HCT116 (cell line): ENCODE measurements at regions of chr4 and their contacts with region 1.

Region 1: GRCh38 chr4:74133786-74134499 is 24.0 kb upstream of the MTHFD2L start:
- DNase-seq: peak; percentile 86
- ATAC-seq: peak; percentile 99
- H3K4me3 ChIP-seq: no peak overlapping the region
- H3K27ac ChIP-seq: no peak overlapping the region
- H3K4me1 ChIP-seq: peaks cover 0 to 6% of the 10 kb centered on the region in 2 experiments; a peak in 2 of 4 replicates
- H3K27me3 ChIP-seq: no peaks in the 10 kb centered on the region
- CTCF ChIP-seq: peak; percentile 84 to 89 (median 85)
- POLR2A ChIP-seq: no peak
- RAD21 ChIP-seq: peak; percentile 97

Region 2: GRCh38 chr4:73311428-73311827 is 822.5 kb before region 1 on chr4:
- CTCF ChIA-PET with region 1: no interaction called
- POLR2A ChIA-PET with region 1: no interaction called
- RAD21 ChIA-PET with region 1: no interaction called
- intact Hi-C with region 1: loop called (anchors 10 kb)
- DNase-seq: peak; percentile 8
- ATAC-seq: no peak
- H3K4me3 ChIP-seq: no peak overlapping the region
- H3K27ac ChIP-seq: no peak overlapping the region
- H3K4me1 ChIP-seq: no peaks in the 10 kb centered on the region
- H3K27me3 ChIP-seq: no peaks in the 10 kb centered on the region
- CTCF ChIP-seq: peak; percentile 12 to 60 (median 42); a peak in 3 of 6 replicates
- POLR2A ChIP-seq: no peak
- RAD21 ChIP-seq: peak; percentile 55

Region 3: GRCh38 chr4:73593631-73594241 is 540.2 kb before region 1 on chr4:
- CTCF ChIA-PET with region 1: interaction called, 16 read pairs
- POLR2A ChIA-PET with region 1: no interaction called
- RAD21 ChIA-PET with region 1: no interaction called
- intact Hi-C with region 1: loop called (anchors 5 kb)
- DNase-seq: peak; percentile 18
- ATAC-seq: no peak
- H3K4me3 ChIP-seq: no peak overlapping the region
- H3K27ac ChIP-seq: no peak overlapping the region
- H3K4me1 ChIP-seq: peaks cover 5% of the 10 kb centered on the region in 2 experiments; a peak in 3 of 4 replicates
- H3K27me3 ChIP-seq: no peaks in the 10 kb centered on the region
- CTCF ChIP-seq: peak; percentile 54 to 64 (median 55); a peak in 5 of 6 replicates
- POLR2A ChIP-seq: no peak
- RAD21 ChIP-seq: peak; percentile 61

Region 4: GRCh38 chr4:73653695-73654106 is 480.2 kb before region 1 on chr4:
- CTCF ChIA-PET with region 1: interaction called, 17 read pairs
- POLR2A ChIA-PET with region 1: no interaction called
- RAD21 ChIA-PET with region 1: interaction called, 4 to 7 read pairs
- intact Hi-C with region 1: no loop called
- DNase-seq: peak; percentile 33
- ATAC-seq: peak; percentile 84
- H3K4me3 ChIP-seq: no peak overlapping the region
- H3K27ac ChIP-seq: no peak overlapping the region
- H3K4me1 ChIP-seq: no peaks in the 10 kb centered on the region
- H3K27me3 ChIP-seq: no peaks in the 10 kb centered on the region
- CTCF ChIP-seq: peak; percentile 45 to 87 (median 73); a peak in 5 of 6 replicates
- POLR2A ChIP-seq: no peak
- RAD21 ChIP-seq: peak; percentile 91

Region 5: DNA sequence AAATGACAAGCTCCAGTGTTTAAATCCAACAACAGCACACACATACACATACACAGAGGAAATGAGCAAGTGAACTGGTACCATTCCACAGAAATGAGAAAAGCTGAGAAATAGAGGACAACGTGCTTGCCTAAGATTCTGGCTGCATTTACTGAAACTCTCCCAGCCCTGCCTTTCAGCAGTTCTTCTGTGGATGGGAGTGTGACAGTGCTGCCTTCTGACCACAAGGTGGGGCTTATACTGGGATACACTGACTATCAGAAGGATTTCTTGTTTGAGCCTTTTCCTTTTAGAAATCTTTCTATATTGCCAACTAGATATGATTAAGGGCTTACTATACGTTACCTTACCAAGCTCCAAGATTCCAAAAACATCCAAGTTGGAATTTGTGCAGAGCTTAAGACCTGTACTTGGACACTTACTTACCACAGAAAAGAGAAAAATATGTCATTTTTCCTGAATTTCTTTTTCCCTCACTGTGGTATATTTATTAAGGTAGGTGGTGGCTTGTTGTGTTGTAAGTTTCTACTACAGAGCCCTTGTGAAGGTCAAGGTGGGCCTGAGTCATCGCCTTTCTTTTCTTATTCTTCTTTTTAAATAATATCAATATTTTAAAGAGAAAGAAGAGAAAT is 404.3 kb before region 1 on chr4:
- CTCF ChIA-PET with region 1: interaction called, 6 read pairs
- POLR2A ChIA-PET with region 1: no interaction called
- RAD21 ChIA-PET with region 1: no interaction called
- intact Hi-C with region 1: loop called (anchors 1 kb)
- DNase-seq: peak; percentile 54
- ATAC-seq: peak; percentile 90
- H3K4me3 ChIP-seq: no peak overlapping the region
- H3K27ac ChIP-seq: no peak overlapping the region
- H3K4me1 ChIP-seq: peaks cover 10 to 16% of the 10 kb centered on the region in 2 experiments; a peak in 3 of 4 replicates
- H3K27me3 ChIP-seq: no peaks in the 10 kb centered on the region
- CTCF ChIP-seq: peak; percentile 71 to 88 (median 87); a peak in 5 of 6 replicates
- POLR2A ChIP-seq: no peak
- RAD21 ChIP-seq: peak; percentile 74

Region 6: DNA sequence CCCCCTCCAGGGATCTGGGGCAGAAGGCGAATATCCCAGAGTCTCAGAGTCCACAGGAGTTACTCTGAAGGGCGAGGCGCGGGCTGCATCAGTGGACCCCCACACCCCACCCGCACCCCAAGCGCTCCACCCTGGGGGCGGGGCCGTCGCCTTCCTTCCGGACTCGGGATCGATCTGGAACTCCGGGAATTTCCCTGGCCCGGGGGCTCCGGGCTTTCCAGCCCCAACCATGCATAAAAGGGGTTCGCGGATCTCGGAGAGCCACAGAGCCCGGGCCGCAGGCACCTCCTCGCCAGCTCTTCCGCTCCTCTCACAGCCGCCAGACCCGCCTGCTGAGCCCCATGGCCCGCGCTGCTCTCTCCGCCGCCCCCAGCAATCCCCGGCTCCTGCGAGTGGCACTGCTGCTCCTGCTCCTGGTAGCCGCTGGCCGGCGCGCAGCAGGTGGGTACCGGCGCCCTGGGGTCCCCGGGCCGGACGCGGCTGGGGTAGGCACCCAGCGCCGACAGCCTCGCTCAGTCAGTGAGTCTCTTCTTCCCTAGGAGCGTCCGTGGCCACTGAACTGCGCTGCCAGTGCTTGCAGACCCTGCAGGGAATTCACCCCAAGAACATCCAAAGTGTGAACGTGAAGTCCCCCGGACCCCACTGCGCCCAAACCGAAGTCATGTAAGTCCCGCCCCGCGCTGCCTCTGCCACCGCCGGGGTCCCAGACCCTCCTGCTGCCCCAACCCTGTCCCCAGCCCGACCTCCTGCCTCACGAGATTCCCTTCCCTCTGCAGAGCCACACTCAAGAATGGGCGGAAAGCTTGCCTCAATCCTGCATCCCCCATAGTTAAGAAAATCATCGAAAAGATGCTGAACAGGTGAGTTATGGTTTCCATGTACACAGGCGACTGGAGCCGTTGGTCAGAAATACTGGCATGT is 264.6 kb before region 1 on chr4 and contains the start of gene CXCL1:
- CTCF ChIA-PET with region 1: interaction called, 13 read pairs
- POLR2A ChIA-PET with region 1: interaction called, 4 read pairs
- RAD21 ChIA-PET with region 1: interaction called in 1 of 2 experiments, 4 read pairs
- intact Hi-C with region 1: loop called (anchors 2 kb)
- DNase-seq: no peak
- ATAC-seq: peak; percentile 70
- H3K4me3 ChIP-seq: peak within 1 kb of the TSS; percentile 62 to 84
- H3K27ac ChIP-seq: peak within 1 kb of the TSS; percentile 48; the same call in 1 of the 2 replicates
- H3K4me1 ChIP-seq: peaks cover 0 to 13% of the 10 kb centered on the region in 2 experiments; a peak in 3 of 4 replicates
- H3K27me3 ChIP-seq: no peaks in the 10 kb centered on the region
- CTCF ChIP-seq: no peak
- POLR2A ChIP-seq: no peak
- RAD21 ChIP-seq: no peak
- total RNA-seq, gene CXCL1: 2.5 TPM

Region 7: GRCh38 chr4:74109116-74109869 is 24.6 kb before region 1 on chr4:
- CTCF ChIA-PET with region 1: interaction called, 20 read pairs
- POLR2A ChIA-PET with region 1: interaction called, 9 read pairs
- RAD21 ChIA-PET with region 1: no interaction called
- intact Hi-C with region 1: no loop called
- DNase-seq: peak; percentile 81
- ATAC-seq: peak; percentile 96
- H3K4me3 ChIP-seq: peak overlapping the region in 1 of 2 experiments; percentile 37; a peak in 2 of 4 replicates
- H3K27ac ChIP-seq: peak overlapping the region; percentile 54
- H3K4me1 ChIP-seq: peaks cover 18 to 48% of the 10 kb centered on the region in 2 experiments
- H3K27me3 ChIP-seq: no peaks in the 10 kb centered on the region
- CTCF ChIP-seq: no peak
- POLR2A ChIP-seq: no peak
- RAD21 ChIP-seq: 0 out of 2 replicates have a peak, but pooled peaks have one; percentile 4

Region 8: GRCh38 chr4:74598611-74599290 is 464.8 kb after region 1 on chr4:
- CTCF ChIA-PET with region 1: no interaction called
- POLR2A ChIA-PET with region 1: no interaction called
- RAD21 ChIA-PET with region 1: no interaction called
- intact Hi-C with region 1: no loop called
- DNase-seq: no peak
- ATAC-seq: no peak
- H3K4me3 ChIP-seq: no peak overlapping the region
- H3K27ac ChIP-seq: no peak overlapping the region
- H3K4me1 ChIP-seq: no peaks in the 10 kb centered on the region
- H3K27me3 ChIP-seq: no peaks in the 10 kb centered on the region
- CTCF ChIP-seq: no peak
- POLR2A ChIP-seq: no peak
- RAD21 ChIP-seq: no peak